Spleen (tissue), 13 donors: ENCODE measurements at regions of chr3 and their contacts with region 1.

Region 1: GRCh38 chr3:15042936-15043335 is 22.2 kb downstream of the MRPS25 start:
- DNase-seq: no peak
- H3K4me3 ChIP-seq: no peak overlapping the region
- H3K27ac ChIP-seq: peak overlapping the region in 1 of 8 donors; percentile 12
- H3K4me1 ChIP-seq: peaks cover 11 to 42% (median 24%) of the 10 kb centered on the region in 6 donors
- H3K27me3 ChIP-seq: no peaks in the 10 kb centered on the region
- CTCF ChIP-seq: no peak
- POLR2A ChIP-seq: no peak

Region 2: GRCh38 chr3:14947886-14948555 is 94.9 kb before region 1 on chr3:
- intact Hi-C with region 1: loop called (anchors 10 kb)
- DNase-seq: peak; percentile 99
- H3K4me3 ChIP-seq: peak overlapping the region; percentile 70 to 94 (median 84)
- H3K27ac ChIP-seq: peak overlapping the region; percentile 94 to 100 (median 99)
- H3K4me1 ChIP-seq: peaks cover 35 to 85% (median 60%) of the 10 kb centered on the region in 6 donors
- H3K27me3 ChIP-seq: no peaks in the 10 kb centered on the region
- CTCF ChIP-seq: peak in 1 of 11 experiments; percentile 3
- POLR2A ChIP-seq: no peak

Region 3: GRCh38 chr3:15120986-15121385 is 78.0 kb after region 1 on chr3:
- intact Hi-C with region 1: no loop called
- DNase-seq: no peak
- H3K4me3 ChIP-seq: no peak overlapping the region
- H3K27ac ChIP-seq: no peak overlapping the region
- H3K4me1 ChIP-seq: peaks cover 0 to 10% (median 5%) of the 10 kb centered on the region in 6 donors
- H3K27me3 ChIP-seq: peaks cover 0 to 13% (median 0%) of the 10 kb centered on the region in 7 donors
- CTCF ChIP-seq: no peak
- POLR2A ChIP-seq: no peak